Heart left ventricle (tissue), 16 donors: ENCODE measurements at regions of chr14 and their contacts with region 1.

Region 1: GRCh38 chr14:64986578-64987571 is at the start of gene FNTB:
- DNase-seq: peak; percentile 95 to 98 (median 98)
- ATAC-seq: peak; percentile 98 to 99 (median 99)
- H3K4me3 ChIP-seq: peak within 1 kb of the TSS; percentile 66 to 93 (median 80)
- H3K27ac ChIP-seq: peak within 1 kb of the TSS; percentile 60 to 94 (median 87)
- H3K4me1 ChIP-seq: peaks cover 0 to 41% (median 14%) of the 10 kb centered on the region in 12 donors
- H3K27me3 ChIP-seq: no peaks in the 10 kb centered on the region
- CTCF ChIP-seq: peak; percentile 56 to 97 (median 80)
- POLR2A ChIP-seq: peak in 1 of 2 donors; percentile 53
- total RNA-seq, gene FNTB: 13.0 to 20.8 (median 16.7) TPM

Region 2: DNA sequence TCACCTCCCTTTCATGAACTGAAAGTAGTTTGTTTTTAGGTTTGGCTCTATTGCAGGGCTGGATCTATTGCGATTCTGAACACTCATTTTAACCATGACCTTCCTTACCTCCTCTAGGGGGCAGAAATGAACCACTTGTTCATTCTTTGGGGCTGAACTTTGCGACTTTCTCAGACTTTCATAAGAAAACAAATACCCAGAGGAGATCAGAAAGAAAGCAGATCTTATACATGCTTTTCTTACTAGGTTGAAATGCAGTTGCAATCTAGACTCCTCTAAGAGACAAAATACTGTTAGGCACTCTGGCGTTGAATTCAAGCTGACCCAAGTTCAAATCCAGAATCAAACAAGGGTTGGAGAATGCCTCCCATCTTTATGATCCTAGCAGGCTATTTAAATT is 315.3 kb before region 1 on chr14:
- intact Hi-C with region 1: no loop called
- DNase-seq: no peak
- ATAC-seq: peak in 3 of 4 donors; percentile 55 to 71 (median 65)
- H3K4me3 ChIP-seq: no peak overlapping the region
- H3K27ac ChIP-seq: no peak overlapping the region
- H3K4me1 ChIP-seq: peaks cover 0 to 30% (median 3%) of the 10 kb centered on the region in 12 donors
- H3K27me3 ChIP-seq: no peaks in the 10 kb centered on the region
- CTCF ChIP-seq: peak; percentile 51 to 84 (median 70)
- POLR2A ChIP-seq: no peak

Region 3: DNA sequence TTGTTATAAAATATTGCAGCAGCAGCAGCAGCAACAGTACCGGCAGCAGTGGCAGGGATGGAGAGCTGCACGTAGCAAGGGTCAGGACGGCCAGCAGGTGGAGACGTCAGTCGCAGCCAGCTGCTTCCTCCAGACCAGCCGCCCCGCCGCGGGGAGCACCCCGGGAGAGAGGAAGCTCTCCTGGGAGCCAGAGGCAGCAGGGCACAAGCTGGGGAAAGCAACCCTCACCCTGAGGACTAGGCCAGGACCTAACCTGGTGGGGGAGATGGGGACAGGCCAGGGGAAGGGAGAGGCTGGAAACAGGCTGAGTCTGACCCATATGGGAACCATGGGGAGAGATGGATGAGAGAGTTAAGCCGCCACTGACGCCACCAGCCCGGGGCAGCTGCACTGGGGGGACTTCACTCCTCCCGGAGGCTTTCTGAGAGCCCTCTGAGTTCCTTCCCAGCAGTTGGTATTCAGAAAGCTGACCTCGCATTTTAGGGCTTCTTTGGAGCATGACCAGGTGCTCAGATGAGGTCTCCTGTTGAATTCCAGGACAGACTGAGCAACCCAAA is 163.5 kb before region 1 on chr14:
- intact Hi-C with region 1: loop called in 6 of 10 experiments (anchors 1 to 10 kb)
- DNase-seq: peak; percentile 74 to 89 (median 86)
- ATAC-seq: peak; percentile 74 to 89 (median 86)
- H3K4me3 ChIP-seq: no peak overlapping the region
- H3K27ac ChIP-seq: peak overlapping the region in 2 of 12 donors; percentile 4 to 17
- H3K4me1 ChIP-seq: peaks cover 0 to 51% (median 20%) of the 10 kb centered on the region in 12 donors
- H3K27me3 ChIP-seq: no peaks in the 10 kb centered on the region
- CTCF ChIP-seq: peak; percentile 62 to 84 (median 76)
- POLR2A ChIP-seq: no peak

Region 4: GRCh38 chr14:64928239-64929013 is 58.4 kb before region 1 on chr14:
- intact Hi-C with region 1: no loop called
- DNase-seq: no peak
- ATAC-seq: no peak
- H3K4me3 ChIP-seq: no peak overlapping the region
- H3K27ac ChIP-seq: peak overlapping the region in 6 of 12 donors; percentile 52 to 78 (median 64)
- H3K4me1 ChIP-seq: peaks cover 0 to 46% (median 19%) of the 10 kb centered on the region in 12 donors
- H3K27me3 ChIP-seq: no peaks in the 10 kb centered on the region
- CTCF ChIP-seq: no peak
- POLR2A ChIP-seq: no peak

Region 5: DNA sequence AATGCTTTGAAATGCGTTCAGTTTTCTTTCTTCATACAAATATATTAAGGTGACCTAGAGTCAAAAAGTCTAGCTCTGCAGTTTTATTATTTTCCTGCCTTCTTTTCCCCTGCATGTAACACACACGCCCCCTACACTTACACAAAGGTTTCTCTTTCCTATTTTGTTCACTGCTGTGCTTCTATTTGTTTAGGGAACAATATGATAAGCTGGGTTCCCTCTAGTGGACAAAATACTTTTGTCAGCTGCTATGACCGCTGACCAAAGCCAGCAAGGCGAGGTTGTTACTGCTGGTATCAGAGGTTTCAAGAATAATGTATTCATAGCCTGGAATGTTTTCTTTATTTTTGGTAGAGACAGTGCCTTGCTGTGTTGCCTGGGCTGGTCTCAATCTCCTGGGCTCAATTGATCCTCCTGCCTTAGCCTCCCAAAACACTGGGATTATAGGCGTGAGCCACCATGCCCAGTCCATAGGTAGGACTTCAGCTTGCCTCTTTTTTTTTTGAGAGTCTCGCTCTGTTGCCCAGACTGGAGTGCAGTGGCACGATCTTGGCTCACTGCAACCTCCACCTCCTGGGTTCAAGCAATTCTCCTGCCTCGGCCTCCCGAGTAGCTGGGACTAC is 33.2 kb after region 1 on chr14:
- intact Hi-C with region 1: loop called in 2 of 10 experiments (anchors 5 kb)
- DNase-seq: peak in 2 of 5 donors; percentile 23 to 28
- ATAC-seq: peak; percentile 84 to 92 (median 88)
- H3K4me3 ChIP-seq: no peak overlapping the region
- H3K27ac ChIP-seq: peak overlapping the region in 5 of 12 donors; percentile 1 to 13 (median 3)
- H3K4me1 ChIP-seq: peaks cover 0 to 14% (median 8%) of the 10 kb centered on the region in 12 donors
- H3K27me3 ChIP-seq: no peaks in the 10 kb centered on the region
- CTCF ChIP-seq: peak; percentile 56 to 89 (median 70)
- POLR2A ChIP-seq: no peak

Region 6: GRCh38 chr14:65164068-65164824 is 177.4 kb after region 1 on chr14:
- intact Hi-C with region 1: loop called in 1 of 10 experiments (anchors 10 kb)
- DNase-seq: no peak
- ATAC-seq: peak in 3 of 4 donors; percentile 47 to 59 (median 48)
- H3K4me3 ChIP-seq: no peak overlapping the region
- H3K27ac ChIP-seq: no peak overlapping the region
- H3K4me1 ChIP-seq: peaks cover 0 to 2% (median 0%) of the 10 kb centered on the region in 12 donors
- H3K27me3 ChIP-seq: no peaks in the 10 kb centered on the region
- CTCF ChIP-seq: peak; percentile 45 to 81 (median 64)
- POLR2A ChIP-seq: no peak